WTC11 (cell line): ENCODE measurements at regions of chr7 and their contacts with region 1.

Region 1: GRCh38 chr7:120792091-120792860 is 65.7 kb downstream of the TSPAN12 start:
- DNase-seq: peak; percentile 88
- ATAC-seq: peak; percentile 99
- H3K4me3 Mint-ChIP-seq: no peak overlapping the region
- H3K27ac Mint-ChIP-seq: no peak overlapping the region
- H3K4me1 Mint-ChIP-seq: peaks cover 15% of the 10 kb centered on the region
- H3K27me3 Mint-ChIP-seq: no peaks in the 10 kb centered on the region
- CTCF ChIP-seq: peak; percentile 88

Region 2: DNA sequence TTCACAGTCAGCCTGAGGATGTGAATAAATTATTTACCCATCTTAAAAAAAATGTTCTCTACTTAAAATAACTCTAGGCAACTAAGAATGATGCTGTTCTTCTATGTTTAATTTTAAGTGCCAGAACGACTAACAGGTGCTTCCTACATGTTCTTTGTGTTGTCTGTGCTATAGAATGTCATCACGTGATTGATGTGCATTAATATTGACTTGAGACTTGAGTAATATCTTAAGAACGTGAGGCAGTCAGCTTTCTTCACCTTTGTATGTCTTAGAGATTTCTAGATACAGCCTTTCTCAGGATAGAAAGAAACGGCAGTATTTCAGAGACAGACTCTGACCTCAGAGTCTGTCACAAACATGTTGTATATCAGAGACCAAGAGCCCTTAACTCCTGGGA is 244.7 kb before region 1 on chr7:
- CTCF ChIA-PET with region 1: no interaction called
- POLR2A ChIA-PET with region 1: no interaction called
- DNase-seq: no peak
- ATAC-seq: no peak
- H3K4me3 Mint-ChIP-seq: no peak overlapping the region
- H3K27ac Mint-ChIP-seq: no peak overlapping the region
- H3K4me1 Mint-ChIP-seq: peaks cover 46% of the 10 kb centered on the region
- H3K27me3 Mint-ChIP-seq: no peaks in the 10 kb centered on the region
- CTCF ChIP-seq: no peak

Region 3: GRCh38 chr7:120695848-120696247 is 96.4 kb before region 1 on chr7:
- CTCF ChIA-PET with region 1: no interaction called
- POLR2A ChIA-PET with region 1: no interaction called
- DNase-seq: no peak
- ATAC-seq: no peak
- H3K4me3 Mint-ChIP-seq: no peak overlapping the region
- H3K27ac Mint-ChIP-seq: no peak overlapping the region
- H3K4me1 Mint-ChIP-seq: peaks cover 7% of the 10 kb centered on the region
- H3K27me3 Mint-ChIP-seq: no peaks in the 10 kb centered on the region
- CTCF ChIP-seq: no peak

Region 4: DNA sequence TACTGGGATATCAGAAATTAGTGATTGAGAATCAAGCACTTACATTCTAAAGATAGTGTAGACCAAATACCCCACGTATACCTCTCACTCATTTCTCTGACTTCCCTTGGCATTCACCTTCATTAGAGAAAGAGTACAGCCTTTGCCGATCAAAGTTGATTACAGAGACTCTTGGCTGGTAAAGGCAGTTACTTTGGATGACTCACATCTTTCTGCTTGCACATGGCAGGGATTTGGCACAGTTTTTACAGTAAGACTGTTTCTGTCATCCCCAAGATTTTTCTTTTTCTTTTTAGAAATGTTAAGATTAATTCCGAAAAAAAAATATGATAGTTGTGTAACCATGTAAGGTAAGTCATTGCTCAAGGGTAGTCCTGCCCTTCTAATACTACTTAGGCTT is 77.3 kb before region 1 on chr7:
- CTCF ChIA-PET with region 1: no interaction called
- POLR2A ChIA-PET with region 1: no interaction called
- DNase-seq: no peak
- ATAC-seq: no peak
- H3K4me3 Mint-ChIP-seq: no peak overlapping the region
- H3K27ac Mint-ChIP-seq: no peak overlapping the region
- H3K4me1 Mint-ChIP-seq: peaks cover 10% of the 10 kb centered on the region
- H3K27me3 Mint-ChIP-seq: no peaks in the 10 kb centered on the region
- CTCF ChIP-seq: no peak

Region 5: GRCh38 chr7:120774481-120774880 is 17.8 kb before region 1 on chr7:
- CTCF ChIA-PET with region 1: interaction called, 14 read pairs
- POLR2A ChIA-PET with region 1: no interaction called
- DNase-seq: no peak
- ATAC-seq: peak; percentile 99
- H3K4me3 Mint-ChIP-seq: no peak overlapping the region
- H3K27ac Mint-ChIP-seq: no peak overlapping the region
- H3K4me1 Mint-ChIP-seq: peaks cover 24% of the 10 kb centered on the region
- H3K27me3 Mint-ChIP-seq: no peaks in the 10 kb centered on the region
- CTCF ChIP-seq: no peak

Region 6: GRCh38 chr7:120805636-120806388 is 13.5 kb after region 1 on chr7:
- CTCF ChIA-PET with region 1: interaction called, 28 read pairs
- POLR2A ChIA-PET with region 1: no interaction called
- DNase-seq: peak; percentile 66
- ATAC-seq: peak; percentile 87
- H3K4me3 Mint-ChIP-seq: no peak overlapping the region
- H3K27ac Mint-ChIP-seq: no peak overlapping the region
- H3K4me1 Mint-ChIP-seq: 0 out of 2 replicates have a peak, but pooled peaks cover 3% of the 10 kb centered on the region
- H3K27me3 Mint-ChIP-seq: no peaks in the 10 kb centered on the region
- CTCF ChIP-seq: peak; percentile 80

Region 7: DNA sequence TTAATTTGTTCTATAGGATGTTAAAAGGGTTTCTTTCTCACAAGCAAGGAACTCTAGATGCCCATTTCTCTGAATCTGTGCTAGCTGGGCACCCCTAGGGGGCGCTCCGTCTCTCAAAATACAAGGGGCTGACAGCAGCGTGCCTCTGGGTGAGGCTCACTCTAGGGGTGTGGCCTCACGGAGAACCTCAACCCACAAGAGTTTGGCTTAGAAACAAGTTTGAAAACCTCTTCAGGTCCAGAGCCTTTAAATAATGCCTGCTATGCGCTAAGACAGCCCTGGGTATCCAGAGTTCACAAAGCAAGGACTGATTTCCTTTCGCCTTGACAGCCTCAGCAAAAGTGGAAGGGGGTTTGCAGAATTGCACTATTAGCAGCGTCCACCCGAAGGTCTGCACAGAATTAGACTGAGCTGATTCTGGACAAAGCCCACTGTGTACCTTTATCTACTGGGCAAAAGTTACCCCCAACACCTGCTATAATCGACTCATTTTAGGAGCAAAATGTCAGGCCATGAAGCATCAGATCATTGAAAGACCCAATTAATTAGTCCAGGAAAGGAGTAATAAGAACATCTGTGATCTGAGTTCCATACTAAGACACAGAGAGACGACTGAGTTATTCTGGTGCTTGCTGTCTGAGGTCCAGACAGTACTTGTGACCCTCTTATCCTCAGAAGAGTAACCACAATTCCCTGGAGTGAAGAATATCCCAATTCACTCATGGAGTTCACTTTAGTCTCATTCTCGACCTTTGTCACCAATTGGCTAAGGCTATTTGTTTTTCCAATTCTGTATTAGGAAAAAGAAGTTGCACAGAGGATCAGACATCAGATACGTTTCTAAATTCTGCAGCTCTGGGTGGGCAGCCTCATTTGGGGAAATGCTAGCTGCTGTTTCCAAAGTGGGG is 195.7 kb after region 1 on chr7:
- CTCF ChIA-PET with region 1: interaction called, 10 read pairs
- POLR2A ChIA-PET with region 1: no interaction called
- DNase-seq: peak; percentile 82
- ATAC-seq: peak; percentile 92
- H3K4me3 Mint-ChIP-seq: peak overlapping the region; percentile 78
- H3K27ac Mint-ChIP-seq: no peak overlapping the region
- H3K4me1 Mint-ChIP-seq: peaks cover 11% of the 10 kb centered on the region
- H3K27me3 Mint-ChIP-seq: peaks cover 25% of the 10 kb centered on the region
- CTCF ChIP-seq: peak; percentile 89